WTC11 (cell line): ENCODE measurements at regions of chr14 and their contacts with region 1.

Region 1: GRCh38 chr14:69543341-69544249 is 31.1 kb downstream of the CCDC177 start:
- DNase-seq: no peak
- ATAC-seq: no peak
- H3K4me3 Mint-ChIP-seq: no peak overlapping the region
- H3K27ac Mint-ChIP-seq: no peak overlapping the region
- H3K4me1 Mint-ChIP-seq: peaks cover 10% of the 10 kb centered on the region
- H3K27me3 Mint-ChIP-seq: peaks cover 12% of the 10 kb centered on the region; the same call in 1 of the 2 replicates
- CTCF ChIP-seq: no peak

Region 2: DNA sequence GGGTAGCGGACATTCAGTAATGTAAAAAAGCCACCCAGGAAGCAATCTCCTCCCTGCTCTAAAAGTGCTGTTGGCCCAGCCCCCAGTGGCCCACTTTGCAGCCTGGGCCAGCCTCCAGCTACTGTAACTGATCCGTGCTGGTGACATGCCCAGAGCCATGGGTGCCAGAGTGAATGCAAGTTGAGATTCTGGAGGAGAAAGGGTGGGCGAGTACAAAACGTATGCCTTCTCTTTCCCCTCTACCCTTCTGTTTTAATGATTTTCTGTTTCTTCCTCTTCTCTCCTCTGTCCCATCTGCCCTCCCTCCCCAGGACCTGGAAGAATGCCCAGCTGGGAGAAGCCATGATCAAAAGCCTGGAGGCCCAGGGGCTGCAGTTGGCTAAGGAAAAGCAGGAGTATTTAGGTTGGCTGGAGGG is 42.2 kb before region 1 on chr14:
- CTCF ChIA-PET with region 1: interaction called, 18 read pairs
- POLR2A ChIA-PET with region 1: no interaction called
- DNase-seq: no peak
- ATAC-seq: no peak
- H3K4me3 Mint-ChIP-seq: no peak overlapping the region
- H3K27ac Mint-ChIP-seq: no peak overlapping the region
- H3K4me1 Mint-ChIP-seq: peaks cover 13% of the 10 kb centered on the region
- H3K27me3 Mint-ChIP-seq: peaks cover 18% of the 10 kb centered on the region
- CTCF ChIP-seq: no peak

Region 3: DNA sequence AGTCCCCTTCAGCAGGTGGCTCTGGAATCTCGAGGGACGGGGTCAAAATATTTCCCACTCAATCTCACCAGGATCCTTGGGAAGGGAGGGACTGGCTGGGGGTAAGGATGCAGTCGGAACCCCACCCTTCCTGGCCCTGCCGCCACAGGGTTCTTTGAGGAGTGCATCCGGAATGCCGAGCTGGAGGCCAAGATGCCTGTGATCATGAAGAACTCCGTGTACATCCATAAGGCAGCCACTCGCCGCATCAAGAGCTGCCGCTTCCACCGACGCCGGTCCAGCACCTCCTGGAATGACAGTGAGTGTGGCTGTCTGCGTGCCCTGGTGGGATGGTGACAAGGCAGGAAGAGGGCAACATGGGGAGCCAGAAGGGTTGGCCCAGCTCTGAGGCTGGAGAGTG is 16.0 kb before region 1 on chr14:
- CTCF ChIA-PET with region 1: interaction called, 20 read pairs
- POLR2A ChIA-PET with region 1: no interaction called
- DNase-seq: no peak
- ATAC-seq: no peak
- H3K4me3 Mint-ChIP-seq: no peak overlapping the region
- H3K27ac Mint-ChIP-seq: no peak overlapping the region
- H3K4me1 Mint-ChIP-seq: no peaks in the 10 kb centered on the region
- H3K27me3 Mint-ChIP-seq: no peaks in the 10 kb centered on the region; the same call in 1 of the 2 replicates
- CTCF ChIP-seq: no peak

Region 4: GRCh38 chr14:69580009-69580577 is 36.5 kb after region 1 on chr14:
- CTCF ChIA-PET with region 1: interaction called, 130 read pairs
- POLR2A ChIA-PET with region 1: interaction called, 4 read pairs
- DNase-seq: peak; percentile 73
- ATAC-seq: peak; percentile 98
- H3K4me3 Mint-ChIP-seq: no peak overlapping the region
- H3K27ac Mint-ChIP-seq: no peak overlapping the region
- H3K4me1 Mint-ChIP-seq: peaks cover 11% of the 10 kb centered on the region
- H3K27me3 Mint-ChIP-seq: peaks cover 15% of the 10 kb centered on the region
- CTCF ChIP-seq: peak; percentile 52; the same call in 1 of the 2 replicates